ENCODE measurements at regions of chr6 and their contacts with region 1.

Region 1: DNA sequence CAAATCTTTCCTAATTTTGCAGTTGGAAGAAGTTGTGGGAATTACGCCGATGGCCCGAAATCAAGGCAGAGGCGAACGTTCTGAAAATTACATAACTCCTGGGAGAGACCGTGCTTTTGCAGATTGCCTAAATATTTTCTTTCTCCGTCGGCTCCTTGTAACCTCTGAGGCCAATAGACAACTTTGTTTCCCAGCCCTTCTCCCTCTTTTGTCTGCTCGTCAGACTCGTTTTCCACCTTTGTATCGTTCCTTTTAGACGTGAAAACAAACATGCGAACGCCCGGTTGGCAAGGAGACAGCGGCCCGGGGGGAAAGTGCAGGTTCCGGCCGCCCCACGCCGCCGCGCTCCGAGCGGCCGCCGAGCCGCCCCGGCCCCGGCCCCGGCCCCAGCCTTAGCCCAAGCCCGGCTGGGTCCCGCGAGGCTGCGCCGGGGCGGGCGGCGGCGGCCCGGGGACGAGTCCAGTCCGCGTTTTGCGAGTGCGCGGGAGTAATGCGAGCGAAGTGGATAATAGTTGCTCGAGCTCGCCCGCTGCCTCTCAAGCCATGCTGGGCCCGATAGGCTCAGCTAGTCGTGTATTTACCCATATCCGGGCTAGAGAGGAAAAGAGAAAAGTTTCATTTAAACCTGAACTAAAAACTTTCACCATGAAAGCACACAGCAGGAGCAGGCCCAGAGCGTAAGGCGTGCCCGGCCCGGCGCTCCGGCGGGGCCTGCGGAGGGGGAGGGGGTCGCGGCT is at the start of gene ARID1B:
- DNase-seq: peak; percentile 88
- H3K4me3 ChIP-seq: peak within 1 kb of the TSS; percentile 88 to 99 (median 96)
- H3K27ac ChIP-seq: peak within 1 kb of the TSS; percentile 99 to 100 (median 99)
- H3K4me1 ChIP-seq: peaks cover 6 to 35% (median 27%) of the 10 kb centered on the region in 4 donors
- H3K27me3 ChIP-seq: no peaks in the 10 kb centered on the region
- CTCF ChIP-seq: no peak
- EP300 ChIP-seq: no peak
- POLR2A ChIP-seq: peak; percentile 79
- total RNA-seq, gene ARID1B: 87.1 to 194 (median 115) TPM

Region 2: DNA sequence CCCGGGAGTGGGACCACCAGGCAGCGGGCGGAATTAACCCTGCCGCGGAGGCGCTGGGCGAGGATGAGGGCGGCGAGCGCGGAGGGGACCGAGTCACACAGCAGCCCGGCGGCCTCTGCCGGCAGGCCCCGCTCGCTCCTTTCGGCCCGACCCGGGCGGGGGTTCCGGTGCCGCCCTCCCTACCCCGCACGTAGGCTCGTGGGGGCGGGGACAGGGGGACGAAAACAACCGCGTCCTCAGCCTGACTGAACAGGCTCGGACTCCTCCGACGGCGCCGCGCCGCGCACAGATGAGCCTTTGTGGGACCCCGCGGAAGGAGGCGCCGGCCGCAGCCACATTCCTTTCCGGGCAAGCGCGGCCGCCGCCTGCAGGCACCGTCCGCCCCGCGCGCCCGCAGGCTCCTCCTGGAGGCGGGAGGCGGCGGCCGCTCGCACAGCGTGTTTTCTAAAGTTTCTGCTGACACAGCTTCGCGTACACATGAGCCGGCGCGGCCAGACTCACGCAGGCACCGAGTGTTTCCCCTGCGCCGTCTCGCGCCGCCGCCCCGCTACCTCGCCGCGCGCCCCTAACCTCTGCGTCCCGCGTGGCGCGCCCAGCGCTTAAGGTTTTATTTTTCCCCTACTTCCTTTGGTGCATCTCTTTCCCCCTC is 244.5 kb after region 1 on chr6:
- in situ Hi-C with region 1: loop called in 2 of 4 experiments (anchors 10 kb)
- intact Hi-C with region 1: loop called (anchors 5 kb)
- DNase-seq: peak; percentile 94
- H3K4me3 ChIP-seq: peak overlapping the region; percentile 73 to 94 (median 82)
- H3K27ac ChIP-seq: peak overlapping the region; percentile 98 to 100 (median 100)
- H3K4me1 ChIP-seq: peaks cover 7 to 42% (median 18%) of the 10 kb centered on the region in 4 donors
- H3K27me3 ChIP-seq: no peaks in the 10 kb centered on the region
- CTCF ChIP-seq: peak; percentile 27 to 74 (median 43)
- EP300 ChIP-seq: no peak
- POLR2A ChIP-seq: peak; percentile 97